Activated CD4-positive, alpha-beta T cell treated with anti-CD3 and anti-CD28 coated beads, Interleukin-2, amount 10 ng/mL, durations not matched to agents 24 days and 14 days (primary cell): ENCODE measurements at regions of chr13 and their contacts with region 1.

Region 1: GRCh38 chr13:48492470-48493065 is 40.3 kb downstream of the RCBTB2 start:
- DNase-seq: peak; percentile 91
- H3K4me3 Mint-ChIP-seq: no peak overlapping the region
- H3K27ac Mint-ChIP-seq: no peak overlapping the region
- H3K4me1 Mint-ChIP-seq: peaks cover 47% of the 10 kb centered on the region
- H3K27me3 Mint-ChIP-seq: no peaks in the 10 kb centered on the region

Region 2: DNA sequence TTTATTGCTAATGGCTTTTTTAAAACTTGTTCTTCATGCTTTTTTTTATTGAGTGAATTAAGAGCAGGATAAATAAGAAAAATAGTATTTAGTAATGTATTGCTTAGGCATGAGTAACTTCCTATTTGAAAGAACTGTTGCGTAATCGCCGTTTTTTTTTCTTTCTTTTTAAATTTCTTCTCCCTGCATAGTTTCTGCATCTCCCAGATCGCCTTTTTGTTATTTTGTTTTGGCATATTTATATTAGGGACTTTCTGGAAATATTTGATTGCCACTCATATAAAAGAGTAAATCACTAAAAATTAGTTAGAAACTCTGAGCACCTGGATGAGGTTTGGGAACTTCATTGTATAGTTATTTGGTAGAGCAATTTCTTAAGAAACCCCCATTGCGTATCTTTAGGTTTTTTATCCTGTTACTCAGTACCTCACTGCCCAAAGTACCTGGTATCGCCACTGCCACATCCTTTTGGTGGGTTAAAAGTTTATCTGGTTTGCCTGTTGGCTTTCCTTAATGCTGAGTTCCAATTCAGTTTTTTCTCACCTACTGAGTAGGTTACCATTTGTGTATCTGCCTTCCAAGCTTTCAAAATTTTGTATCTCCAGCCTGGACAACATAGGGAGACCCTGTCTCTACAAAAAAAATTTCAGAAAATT is 43.5 kb before region 1 on chr13:
- intact Hi-C with region 1: loop called (anchors 2 kb)
- DNase-seq: no peak
- H3K4me3 Mint-ChIP-seq: peak overlapping the region; percentile 53
- H3K27ac Mint-ChIP-seq: no peak overlapping the region
- H3K4me1 Mint-ChIP-seq: peaks cover 18% of the 10 kb centered on the region
- H3K27me3 Mint-ChIP-seq: no peaks in the 10 kb centered on the region

Region 3: GRCh38 chr13:48505597-48506091 is 13.1 kb after region 1 on chr13:
- intact Hi-C with region 1: loop called (anchors 1 kb)
- DNase-seq: peak; percentile 89
- H3K4me3 Mint-ChIP-seq: peak overlapping the region; percentile 64
- H3K27ac Mint-ChIP-seq: peak overlapping the region; percentile 84
- H3K4me1 Mint-ChIP-seq: peaks cover 66% of the 10 kb centered on the region
- H3K27me3 Mint-ChIP-seq: peaks cover 7% of the 10 kb centered on the region

Region 4: DNA sequence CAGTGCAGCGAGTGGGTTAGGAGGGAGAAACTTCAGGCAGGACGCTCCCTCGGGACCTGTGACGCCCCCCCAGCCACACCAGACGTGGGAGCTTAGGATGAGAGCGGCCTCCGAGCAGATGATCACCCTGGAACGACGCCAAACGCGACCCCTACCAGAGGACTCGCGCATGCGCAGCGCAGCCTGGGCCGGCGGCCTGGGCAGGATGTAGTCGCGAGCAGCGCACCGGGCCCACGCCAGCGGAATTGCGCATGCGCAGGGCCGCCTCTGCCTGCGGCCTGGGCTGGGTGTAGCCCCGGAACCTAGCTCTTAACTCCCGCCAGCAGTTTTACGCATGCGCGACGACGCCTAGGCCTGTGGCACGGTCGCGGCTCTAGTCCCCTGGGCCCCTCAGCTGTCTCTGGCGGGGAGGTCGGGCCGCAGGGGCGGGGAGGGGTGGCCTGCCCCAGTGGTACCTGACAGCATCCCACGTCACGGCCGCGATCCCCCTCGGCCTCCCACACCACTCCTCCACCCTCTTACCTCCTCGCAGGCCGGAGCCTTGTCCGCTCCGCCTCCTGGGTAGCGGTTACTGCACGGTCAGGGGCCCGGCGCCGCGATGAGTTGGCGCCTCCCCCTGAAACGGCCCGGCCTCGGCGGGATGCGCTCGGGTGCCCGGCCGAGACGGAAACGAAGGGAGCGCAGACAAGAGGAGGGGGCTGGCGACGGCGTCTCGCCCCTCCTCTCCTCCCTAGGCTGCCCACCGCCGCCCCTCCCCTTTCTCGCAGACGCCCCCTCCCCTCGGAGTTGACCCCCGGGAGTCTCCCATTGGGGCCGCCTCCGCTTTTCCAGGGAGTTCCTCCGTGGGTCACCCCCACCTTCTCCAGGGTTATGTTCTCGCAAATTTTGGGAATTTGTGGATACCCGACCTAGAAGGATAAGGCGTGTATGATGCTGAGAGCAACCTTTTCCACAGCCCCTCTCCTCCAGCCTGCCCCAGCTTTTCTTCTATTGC is 40.2 kb after region 1 on chr13 and contains the start of gene RCBTB2:
- intact Hi-C with region 1: loop called (anchors 2 kb)
- DNase-seq: peak; percentile 100
- H3K4me3 Mint-ChIP-seq: peak within 1 kb of the TSS; percentile 87
- H3K27ac Mint-ChIP-seq: peak within 1 kb of the TSS; percentile 96
- H3K4me1 Mint-ChIP-seq: peaks cover 26% of the 10 kb centered on the region
- H3K27me3 Mint-ChIP-seq: peaks cover 15% of the 10 kb centered on the region
- total RNA-seq, gene RCBTB2: 1.6 and 1.7 TPM in 2 replicates